MCF 10A (cell line): ENCODE measurements at regions of chr6 and their contacts with region 1.

Region 1: DNA sequence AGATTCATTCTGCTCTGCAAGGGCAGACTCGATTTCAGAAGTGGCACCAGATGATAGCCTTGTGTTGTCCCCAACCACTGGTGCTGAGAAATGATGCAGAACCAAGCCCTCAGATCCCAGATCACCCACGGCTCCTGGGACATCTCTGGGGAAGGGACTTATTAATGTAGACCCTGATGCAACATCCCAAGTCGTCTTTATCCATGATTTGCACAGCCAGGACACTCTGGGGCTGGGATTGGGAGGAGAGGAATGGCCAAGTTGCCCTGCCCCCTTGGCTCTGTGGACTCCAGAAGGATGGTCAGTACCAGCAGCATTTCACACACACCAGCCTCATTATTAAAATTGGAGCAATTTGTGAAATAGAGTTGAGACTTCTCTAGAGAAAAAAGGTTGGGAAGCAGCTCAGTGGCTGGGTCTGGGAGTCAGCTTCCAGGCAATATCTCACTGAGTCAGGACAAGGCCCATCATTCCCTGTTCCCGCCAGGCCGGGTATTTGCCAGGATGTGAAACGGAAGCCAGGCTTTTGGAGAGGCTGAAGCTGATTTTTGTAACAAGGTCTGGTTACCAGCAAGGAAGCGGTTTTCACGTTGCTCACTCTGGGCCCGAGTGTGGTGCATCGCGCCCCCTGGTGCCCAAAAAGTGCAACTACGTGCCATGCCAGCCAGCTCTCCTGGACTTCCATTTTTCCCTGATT is 67.4 kb downstream of the ZBTB2 start:
- DNase-seq: peak; percentile 78
- H3K4me3 Mint-ChIP-seq: no peak overlapping the region
- H3K27ac Mint-ChIP-seq: no peak overlapping the region
- H3K4me1 Mint-ChIP-seq: peaks cover 20% of the 10 kb centered on the region
- H3K27me3 Mint-ChIP-seq: no peaks in the 10 kb centered on the region
- CTCF ChIP-seq: peak; percentile 95

Region 2: DNA sequence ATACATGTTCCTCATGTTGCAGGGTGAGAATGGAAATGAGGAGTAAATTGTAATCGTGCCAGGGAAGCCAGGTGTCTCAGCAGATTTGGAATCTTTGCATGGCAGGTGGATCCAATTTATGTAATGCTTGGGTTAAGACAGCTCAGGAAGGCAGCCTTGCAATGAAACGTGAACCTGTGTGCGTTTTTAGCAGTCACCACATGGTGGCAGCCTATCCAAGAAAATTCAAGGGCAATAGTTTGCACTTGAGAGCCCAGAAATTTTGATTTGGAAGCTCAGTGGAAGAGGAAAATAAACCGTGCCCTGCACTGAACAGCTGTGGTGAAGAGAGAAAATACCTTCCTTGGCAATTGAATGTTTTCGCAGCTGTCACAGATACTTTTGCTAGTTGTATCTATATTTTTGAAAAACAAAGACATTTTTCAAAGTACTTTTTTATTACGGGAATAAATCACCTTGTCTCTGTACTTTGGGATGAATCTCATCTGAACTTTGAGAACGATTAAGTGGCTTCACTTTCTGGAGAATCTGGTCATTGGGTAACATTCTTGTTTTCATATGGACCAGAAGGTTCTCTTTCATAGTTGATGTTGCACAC is 432.0 kb before region 1 on chr6:
- CTCF ChIA-PET with region 1: interaction called, 116 read pairs
- POLR2A ChIA-PET with region 1: interaction called, 11 read pairs
- intact Hi-C with region 1: loop called (anchors 1 kb)
- DNase-seq: peak; percentile 72
- H3K4me3 Mint-ChIP-seq: no peak overlapping the region
- H3K27ac Mint-ChIP-seq: no peak overlapping the region
- H3K4me1 Mint-ChIP-seq: peaks cover 6% of the 10 kb centered on the region
- H3K27me3 Mint-ChIP-seq: no peaks in the 10 kb centered on the region
- CTCF ChIP-seq: peak; percentile 74

Region 3: DNA sequence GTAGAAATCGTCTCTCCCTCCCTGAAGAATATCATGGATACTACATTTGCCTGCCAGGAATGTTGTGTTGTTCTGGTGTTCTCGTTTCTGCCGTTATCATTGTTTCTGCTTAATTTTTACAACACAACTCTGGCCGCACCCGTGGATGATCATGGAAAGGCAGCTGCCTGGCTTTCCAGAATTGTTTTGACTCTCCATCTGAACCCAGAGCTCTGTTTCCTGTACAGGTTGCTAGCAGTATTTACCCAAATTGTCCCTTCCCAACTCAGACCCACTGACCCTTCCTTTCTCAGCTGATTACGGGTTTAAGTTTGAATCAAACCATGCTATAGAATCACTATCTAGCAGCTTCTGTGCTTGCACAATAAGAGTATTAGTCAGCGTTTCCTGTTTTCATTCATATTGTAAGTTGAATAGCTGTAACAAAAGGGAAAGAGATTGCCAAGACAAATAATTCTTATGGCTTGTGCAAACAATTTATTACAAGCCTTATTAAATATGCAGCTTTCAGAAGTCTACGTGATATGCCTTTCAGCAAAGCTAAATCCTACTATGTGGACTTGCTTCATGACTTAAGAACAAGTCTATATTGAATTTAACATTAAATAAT is 319.4 kb before region 1 on chr6:
- CTCF ChIA-PET with region 1: interaction called, 23 read pairs
- POLR2A ChIA-PET with region 1: interaction called, 11 read pairs
- intact Hi-C with region 1: no loop called
- DNase-seq: peak; percentile 93
- H3K4me3 Mint-ChIP-seq: peak overlapping the region; percentile 54
- H3K27ac Mint-ChIP-seq: peak overlapping the region; percentile 83
- H3K4me1 Mint-ChIP-seq: peaks cover 27% of the 10 kb centered on the region
- H3K27me3 Mint-ChIP-seq: no peaks in the 10 kb centered on the region
- CTCF ChIP-seq: no peak

Region 4: DNA sequence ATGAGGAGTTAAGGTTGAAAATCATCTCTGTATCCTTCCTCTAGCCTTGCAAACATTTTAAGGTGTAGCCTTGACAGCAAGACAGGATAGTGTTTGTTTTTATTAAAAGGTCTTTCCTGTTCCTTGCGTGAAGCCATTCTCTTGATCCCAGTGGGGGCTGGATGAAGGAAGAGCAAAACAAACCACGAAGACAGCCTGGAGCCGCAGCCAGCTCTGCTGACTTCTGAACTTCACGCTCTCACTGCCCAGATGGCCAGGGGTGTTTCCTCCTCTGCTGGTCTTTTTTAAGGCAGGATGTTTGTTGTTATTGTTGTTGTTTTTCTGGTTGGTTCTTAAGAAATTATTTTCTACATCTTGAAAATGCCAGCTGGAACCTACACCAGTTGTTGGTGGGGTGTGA is 302.0 kb before region 1 on chr6:
- CTCF ChIA-PET with region 1: interaction called, 293 read pairs
- POLR2A ChIA-PET with region 1: interaction called, 4 read pairs
- intact Hi-C with region 1: no loop called
- DNase-seq: no peak
- H3K4me3 Mint-ChIP-seq: no peak overlapping the region
- H3K27ac Mint-ChIP-seq: no peak overlapping the region
- H3K4me1 Mint-ChIP-seq: peaks cover 6% of the 10 kb centered on the region
- H3K27me3 Mint-ChIP-seq: no peaks in the 10 kb centered on the region
- CTCF ChIP-seq: no peak

Region 5: DNA sequence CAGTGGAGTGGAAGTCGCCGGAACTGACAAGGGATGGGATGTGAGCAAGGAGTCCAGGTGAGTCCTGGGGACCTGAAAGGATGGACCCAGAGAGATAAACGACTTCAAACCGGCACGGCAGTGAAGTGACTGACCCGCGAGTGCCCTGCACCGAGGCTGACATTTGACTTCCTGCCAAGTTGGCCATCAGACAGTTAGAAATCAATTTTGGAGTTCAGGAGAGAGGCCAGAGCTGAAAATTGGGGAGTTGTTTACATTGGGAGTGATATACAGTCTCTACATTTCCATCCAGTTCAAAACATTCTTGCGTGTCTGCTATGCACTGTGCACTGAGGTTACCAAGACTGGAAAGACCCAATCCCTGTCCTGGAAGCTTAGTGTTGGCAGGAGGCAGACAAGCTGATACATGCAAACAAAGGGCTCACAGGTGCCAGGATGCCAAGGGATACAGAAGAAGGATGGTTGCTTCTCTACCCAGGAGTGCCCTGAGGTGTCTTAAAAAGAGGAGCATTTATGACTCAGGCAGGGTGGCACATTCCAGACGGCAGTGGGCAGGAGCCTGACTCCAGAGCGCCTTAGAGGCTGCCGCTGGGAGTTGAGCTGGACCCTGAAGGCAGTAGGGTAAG is 271.8 kb before region 1 on chr6:
- CTCF ChIA-PET with region 1: interaction called, 20 read pairs
- POLR2A ChIA-PET with region 1: interaction called, 7 read pairs
- intact Hi-C with region 1: no loop called
- DNase-seq: peak; percentile 95
- H3K4me3 Mint-ChIP-seq: no peak overlapping the region
- H3K27ac Mint-ChIP-seq: peak overlapping the region; percentile 73
- H3K4me1 Mint-ChIP-seq: peaks cover 16% of the 10 kb centered on the region
- H3K27me3 Mint-ChIP-seq: no peaks in the 10 kb centered on the region
- CTCF ChIP-seq: no peak

Region 6: GRCh38 chr6:151067684-151068596 is 256.0 kb before region 1 on chr6:
- CTCF ChIA-PET with region 1: interaction called, 11 read pairs
- POLR2A ChIA-PET with region 1: interaction called, 9 read pairs
- intact Hi-C with region 1: loop called (anchors 1 kb)
- DNase-seq: peak; percentile 93
- H3K4me3 Mint-ChIP-seq: peak overlapping the region; percentile 56
- H3K27ac Mint-ChIP-seq: peak overlapping the region; percentile 97
- H3K4me1 Mint-ChIP-seq: peaks cover 30% of the 10 kb centered on the region
- H3K27me3 Mint-ChIP-seq: no peaks in the 10 kb centered on the region
- CTCF ChIP-seq: no peak

Region 7: DNA sequence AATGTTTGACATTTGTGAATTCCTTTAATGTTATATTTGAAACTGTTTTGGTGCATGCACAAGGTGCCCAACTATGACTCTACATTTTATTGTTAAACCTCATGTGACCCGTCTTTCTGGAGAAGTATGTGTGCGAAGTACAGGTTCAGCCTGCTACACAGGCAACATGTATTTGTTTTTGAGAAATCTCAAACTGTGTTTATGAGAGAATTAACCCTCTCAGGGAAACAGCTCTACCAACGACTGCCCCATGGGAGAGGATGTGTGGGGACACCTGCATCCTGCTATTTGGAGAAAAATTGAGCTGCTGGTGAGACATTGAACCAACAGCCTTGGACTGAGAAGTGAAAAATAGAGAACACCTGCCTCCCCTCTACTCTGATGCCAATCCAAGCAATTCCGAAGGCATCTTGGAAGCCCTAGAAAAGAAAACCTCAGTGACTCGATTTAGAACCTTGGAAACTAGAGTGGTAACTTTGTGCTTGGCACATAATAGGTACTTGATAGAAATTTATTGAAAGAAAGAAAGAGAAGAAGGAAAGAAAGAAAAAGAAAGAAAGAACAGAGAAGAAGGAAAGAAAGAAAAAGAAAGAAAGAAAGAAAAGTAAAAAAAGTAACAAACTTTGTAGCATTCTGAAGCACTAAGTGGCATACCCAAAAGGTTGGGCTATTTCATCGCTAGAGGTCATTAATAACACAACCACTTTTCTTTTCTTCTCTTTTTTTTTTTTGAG is 87.1 kb before region 1 on chr6:
- CTCF ChIA-PET with region 1: no interaction called
- POLR2A ChIA-PET with region 1: no interaction called
- intact Hi-C with region 1: no loop called
- DNase-seq: no peak
- H3K4me3 Mint-ChIP-seq: no peak overlapping the region
- H3K27ac Mint-ChIP-seq: no peak overlapping the region
- H3K4me1 Mint-ChIP-seq: no peaks in the 10 kb centered on the region
- H3K27me3 Mint-ChIP-seq: peaks cover 38% of the 10 kb centered on the region
- CTCF ChIP-seq: no peak

Region 8: GRCh38 chr6:151284431-151285065 is 39.4 kb before region 1 on chr6:
- CTCF ChIA-PET with region 1: interaction called, 10 read pairs
- POLR2A ChIA-PET with region 1: no interaction called
- intact Hi-C with region 1: no loop called
- DNase-seq: no peak
- H3K4me3 Mint-ChIP-seq: no peak overlapping the region
- H3K27ac Mint-ChIP-seq: no peak overlapping the region
- H3K4me1 Mint-ChIP-seq: no peaks in the 10 kb centered on the region
- H3K27me3 Mint-ChIP-seq: no peaks in the 10 kb centered on the region
- CTCF ChIP-seq: no peak

Region 9: GRCh38 chr6:151300267-151300991 is 23.5 kb before region 1 on chr6:
- CTCF ChIA-PET with region 1: no interaction called
- POLR2A ChIA-PET with region 1: no interaction called
- intact Hi-C with region 1: no loop called
- DNase-seq: no peak
- H3K4me3 Mint-ChIP-seq: no peak overlapping the region
- H3K27ac Mint-ChIP-seq: no peak overlapping the region
- H3K4me1 Mint-ChIP-seq: no peaks in the 10 kb centered on the region
- H3K27me3 Mint-ChIP-seq: no peaks in the 10 kb centered on the region
- CTCF ChIP-seq: no peak